HCT116 (cell line): ENCODE measurements at regions of chr16 and their contacts with region 1.

Region 1: DNA sequence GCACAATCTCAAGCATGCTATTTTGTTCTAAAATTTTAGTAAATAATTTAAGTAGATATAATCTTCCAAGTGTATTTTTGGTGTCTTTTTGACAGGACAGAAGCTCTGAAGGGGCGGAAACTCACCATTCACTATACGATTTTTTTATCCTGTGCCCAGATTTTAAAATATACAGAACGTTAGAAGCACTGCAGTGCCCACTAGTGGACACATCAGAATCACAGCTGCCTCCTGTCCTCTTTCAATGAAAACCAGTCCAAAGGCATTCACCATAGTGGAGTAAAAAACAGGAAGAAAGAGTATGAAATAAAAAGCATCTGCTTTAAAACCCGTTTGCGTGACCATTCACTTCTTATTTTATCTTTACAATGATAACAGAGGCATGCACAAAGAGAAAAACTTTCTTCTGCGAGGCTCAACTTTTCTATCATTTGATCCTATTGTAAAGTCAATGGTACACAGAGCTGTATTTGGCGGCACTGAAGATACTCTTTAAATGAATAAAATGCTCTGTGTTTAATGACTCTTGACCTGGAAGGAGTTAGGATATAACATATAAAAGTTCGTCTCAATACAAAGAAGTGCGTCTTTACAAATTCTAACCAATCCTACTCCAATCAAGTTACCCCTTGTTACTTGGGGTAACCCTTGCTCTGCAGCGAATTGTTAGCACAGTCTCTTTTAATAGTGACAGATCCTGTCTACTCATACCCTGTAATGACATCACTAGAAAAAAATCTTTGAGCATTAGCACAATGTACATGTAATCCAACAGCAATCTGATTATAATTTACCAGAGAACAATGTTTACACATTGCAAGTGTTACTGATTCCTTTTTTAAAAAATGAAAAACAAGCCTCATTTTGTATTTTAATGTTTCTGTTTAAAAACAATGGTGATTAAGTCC is 339.8 kb upstream of the PSMD7 start:
- DNase-seq: peak; percentile 32
- ATAC-seq: peak; percentile 71
- H3K4me3 ChIP-seq: no peak overlapping the region
- H3K27ac ChIP-seq: no peak overlapping the region
- H3K4me1 ChIP-seq: no peaks in the 10 kb centered on the region
- H3K27me3 ChIP-seq: peaks cover 32% of the 10 kb centered on the region; the same call in 1 of the 2 replicates
- CTCF ChIP-seq: peak; percentile 53 to 87 (median 82); a peak in 5 of 6 replicates
- POLR2A ChIP-seq: no peak
- RAD21 ChIP-seq: peak; percentile 66

Region 2: GRCh38 chr16:73565262-73565661 is 391.6 kb before region 1 on chr16:
- CTCF ChIA-PET with region 1: interaction called, 3 read pairs
- POLR2A ChIA-PET with region 1: no interaction called
- RAD21 ChIA-PET with region 1: no interaction called
- intact Hi-C with region 1: loop called (anchors 1 kb)
- DNase-seq: peak; percentile 15
- ATAC-seq: peak; percentile 72
- H3K4me3 ChIP-seq: no peak overlapping the region
- H3K27ac ChIP-seq: no peak overlapping the region
- H3K4me1 ChIP-seq: no peaks in the 10 kb centered on the region
- H3K27me3 ChIP-seq: peaks cover 39% of the 10 kb centered on the region
- CTCF ChIP-seq: peak; percentile 32 to 45 (median 43); a peak in 5 of 6 replicates
- POLR2A ChIP-seq: no peak
- RAD21 ChIP-seq: peak; percentile 64

Region 3: DNA sequence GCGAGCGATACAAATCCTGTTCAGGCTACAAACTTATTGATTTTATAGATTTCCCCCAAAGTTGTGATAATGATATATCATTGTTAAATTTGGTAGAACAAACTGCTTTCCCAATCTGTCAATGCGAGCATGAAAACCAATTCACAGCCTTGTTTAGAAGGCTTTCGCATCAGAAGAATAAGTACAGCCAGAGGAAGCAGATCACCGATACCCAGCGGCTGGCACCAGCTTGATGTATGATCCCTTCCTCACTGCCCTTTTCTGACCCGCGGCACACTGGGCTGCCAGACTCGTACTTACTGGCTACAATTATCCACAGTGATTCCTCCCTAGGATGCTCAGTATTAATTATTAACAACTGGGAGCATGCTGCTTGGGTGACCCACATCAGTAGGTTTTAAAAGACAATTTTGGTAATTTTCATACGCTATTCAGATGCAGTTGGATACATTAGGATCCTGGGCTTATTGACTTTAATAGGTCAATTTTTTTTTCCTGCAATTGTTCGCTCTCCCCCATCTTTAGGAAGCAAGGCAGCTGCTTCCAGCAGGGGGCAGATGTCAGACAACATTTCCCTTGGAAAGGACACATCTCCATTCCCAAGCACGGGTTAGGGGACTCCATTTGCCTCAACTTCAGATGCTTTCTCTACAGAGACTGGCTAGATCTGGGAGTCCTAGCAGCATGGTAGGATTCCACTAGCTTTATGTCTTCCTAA is 242.9 kb before region 1 on chr16:
- CTCF ChIA-PET with region 1: no interaction called
- POLR2A ChIA-PET with region 1: no interaction called
- RAD21 ChIA-PET with region 1: no interaction called
- intact Hi-C with region 1: loop called (anchors 2 kb)
- DNase-seq: peak; percentile 27
- ATAC-seq: peak; percentile 80
- H3K4me3 ChIP-seq: no peak overlapping the region
- H3K27ac ChIP-seq: no peak overlapping the region
- H3K4me1 ChIP-seq: no peaks in the 10 kb centered on the region
- H3K27me3 ChIP-seq: peaks cover 28% of the 10 kb centered on the region; the same call in 1 of the 2 replicates
- CTCF ChIP-seq: peak; percentile 29 to 75 (median 69); a peak in 4 of 6 replicates
- POLR2A ChIP-seq: no peak
- RAD21 ChIP-seq: peak; percentile 51

Region 4: DNA sequence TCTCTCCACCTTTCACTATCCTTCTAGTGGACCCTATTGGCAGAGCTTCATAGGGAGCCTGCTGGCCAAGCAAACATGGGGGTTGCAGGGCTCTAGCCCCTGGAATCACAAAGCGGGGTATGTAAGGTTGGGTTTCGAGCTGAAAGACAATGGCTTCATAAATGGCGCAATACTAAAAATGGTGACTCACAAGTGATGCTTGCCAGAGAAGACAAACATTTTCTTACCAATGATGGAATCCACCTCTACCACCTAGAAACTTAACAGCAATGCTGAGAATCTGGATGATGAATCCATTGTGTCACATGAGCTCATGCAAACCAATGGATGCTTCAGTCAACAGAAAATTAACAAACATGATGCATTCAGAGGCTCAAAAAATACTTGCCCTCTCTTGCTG is 35.5 kb before region 1 on chr16:
- CTCF ChIA-PET with region 1: no interaction called
- POLR2A ChIA-PET with region 1: no interaction called
- RAD21 ChIA-PET with region 1: no interaction called
- intact Hi-C with region 1: no loop called
- DNase-seq: no peak
- ATAC-seq: no peak
- H3K4me3 ChIP-seq: no peak overlapping the region
- H3K27ac ChIP-seq: no peak overlapping the region
- H3K4me1 ChIP-seq: no peaks in the 10 kb centered on the region
- H3K27me3 ChIP-seq: peaks cover 34% of the 10 kb centered on the region
- CTCF ChIP-seq: no peak
- POLR2A ChIP-seq: no peak
- RAD21 ChIP-seq: no peak